ENCODE measurements at regions of chr3 and their contacts with region 1.

Region 1: DNA sequence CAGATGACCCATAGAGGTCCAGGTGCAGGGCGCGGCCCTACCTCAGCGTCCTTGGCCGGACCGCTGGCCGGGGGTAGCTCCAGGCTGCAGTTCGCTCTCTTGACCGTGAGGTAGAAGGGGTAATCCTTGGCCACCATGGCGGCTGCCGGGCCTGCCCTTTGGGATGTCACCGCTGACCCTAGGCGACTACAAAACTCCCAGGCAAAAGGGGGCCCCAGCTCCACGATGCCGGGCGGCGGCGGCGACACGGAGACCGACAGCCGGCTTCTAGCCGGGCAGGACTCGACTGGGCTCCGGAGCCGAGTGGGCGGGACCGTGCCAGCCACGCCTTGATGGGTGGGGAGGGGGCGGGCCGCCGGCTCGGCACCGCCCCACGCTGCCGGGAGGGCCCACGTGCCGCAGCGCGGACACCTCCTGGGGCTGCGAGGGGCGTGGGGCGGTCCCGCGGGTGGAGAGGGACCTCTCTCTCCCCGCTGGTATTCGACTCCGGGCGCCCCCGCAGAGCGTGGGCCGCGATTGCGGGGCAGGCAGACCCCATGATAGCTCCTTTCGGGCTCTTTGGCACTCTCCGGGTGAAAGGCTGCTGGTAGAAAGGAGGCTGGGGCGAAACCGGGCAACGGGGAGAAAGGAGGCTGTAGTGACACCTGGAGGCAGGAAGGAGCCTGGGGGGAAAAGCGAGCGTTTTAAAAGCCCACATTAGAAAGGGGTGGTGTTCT is at the start of gene ARHGEF3:
- DNase-seq: peak; percentile 95
- ATAC-seq: peak; percentile 92
- H3K4me3 ChIP-seq: peak within 1 kb of the TSS; percentile 66 to 96 (median 72)
- H3K4me3 Mint-ChIP-seq: peak within 1 kb of the TSS; percentile 92
- H3K27ac ChIP-seq: peak within 1 kb of the TSS; percentile 35 to 53
- H3K27ac Mint-ChIP-seq: peak within 1 kb of the TSS; percentile 87
- H3K4me1 ChIP-seq: peaks cover 38 to 39% of the 10 kb centered on the region in 2 donors
- H3K4me1 Mint-ChIP-seq: peaks cover 48% of the 10 kb centered on the region
- H3K27me3 ChIP-seq: no peaks in the 10 kb centered on the region
- H3K27me3 Mint-ChIP-seq: no peaks in the 10 kb centered on the region
- CTCF ChIP-seq: peak; percentile 75
- total RNA-seq, gene ARHGEF3: 30.8 and 34.6 TPM in 2 replicates

Region 2: DNA sequence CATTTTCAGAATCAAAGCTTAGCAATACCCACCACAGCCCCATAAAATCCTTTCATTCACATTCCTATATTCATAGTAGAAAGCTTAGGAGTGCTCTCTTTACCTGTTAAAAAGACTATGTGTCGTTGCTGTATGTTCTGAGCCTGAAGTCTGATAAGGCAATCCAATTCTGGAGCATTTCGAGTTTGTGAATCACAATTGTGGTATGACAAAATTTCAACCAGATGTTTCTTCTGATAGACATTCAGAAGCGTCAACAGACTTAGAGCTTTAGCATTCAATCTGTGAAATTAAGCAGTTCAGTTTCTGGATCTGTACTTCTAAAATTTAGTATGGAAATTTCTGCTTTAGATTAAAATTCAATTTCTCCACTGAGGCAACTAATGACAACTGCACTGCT is 177.1 kb before region 1 on chr3:
- CTCF ChIA-PET with region 1: no interaction called
- POLR2A ChIA-PET with region 1: no interaction called
- intact Hi-C with region 1: no loop called
- DNase-seq: no peak
- ATAC-seq: no peak
- H3K4me3 ChIP-seq: no peak overlapping the region
- H3K4me3 Mint-ChIP-seq: no peak overlapping the region
- H3K27ac ChIP-seq: no peak overlapping the region
- H3K27ac Mint-ChIP-seq: no peak overlapping the region
- H3K4me1 ChIP-seq: no peaks in the 10 kb centered on the region
- H3K4me1 Mint-ChIP-seq: no peaks in the 10 kb centered on the region
- H3K27me3 ChIP-seq: no peaks in the 10 kb centered on the region
- H3K27me3 Mint-ChIP-seq: no peaks in the 10 kb centered on the region
- CTCF ChIP-seq: no peak

Region 3: GRCh38 chr3:56682462-56683121 is 119.2 kb before region 1 on chr3:
- CTCF ChIA-PET with region 1: interaction called, 34 read pairs
- POLR2A ChIA-PET with region 1: interaction called, 24 read pairs
- intact Hi-C with region 1: loop called (anchors 1 kb)
- DNase-seq: peak; percentile 91
- ATAC-seq: peak; percentile 69
- H3K4me3 ChIP-seq: peak overlapping the region; percentile 74 to 99 (median 85)
- H3K4me3 Mint-ChIP-seq: peak overlapping the region; percentile 99
- H3K27ac ChIP-seq: peak overlapping the region; percentile 98 to 99
- H3K27ac Mint-ChIP-seq: peak overlapping the region; percentile 99
- H3K4me1 ChIP-seq: peaks cover 16 to 24% of the 10 kb centered on the region in 2 donors
- H3K4me1 Mint-ChIP-seq: peaks cover 42% of the 10 kb centered on the region
- H3K27me3 ChIP-seq: no peaks in the 10 kb centered on the region
- H3K27me3 Mint-ChIP-seq: no peaks in the 10 kb centered on the region
- CTCF ChIP-seq: no peak

Region 4: DNA sequence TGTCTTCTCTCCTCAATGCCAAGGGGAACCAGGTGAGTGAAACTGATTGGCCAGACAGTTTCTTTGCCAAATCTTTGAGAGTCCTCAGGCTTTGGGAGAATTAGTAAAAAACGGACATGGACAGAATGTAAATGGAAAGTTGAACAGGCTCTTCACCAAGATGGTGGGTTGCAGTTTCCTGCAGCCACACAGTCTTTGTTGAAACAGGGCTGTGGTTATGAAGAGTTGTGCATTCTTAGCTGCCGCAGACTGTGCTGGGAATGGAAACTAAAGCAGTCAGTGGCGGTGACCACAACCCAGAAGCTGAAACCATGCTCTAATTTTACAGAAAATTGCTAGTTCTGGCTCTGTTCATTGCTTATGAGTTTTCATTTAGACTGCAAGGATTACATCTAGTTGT is 76.6 kb before region 1 on chr3:
- CTCF ChIA-PET with region 1: interaction called, 61 read pairs
- POLR2A ChIA-PET with region 1: interaction called, 7 read pairs
- intact Hi-C with region 1: no loop called
- DNase-seq: peak; percentile 15
- ATAC-seq: peak; percentile 57
- H3K4me3 ChIP-seq: no peak overlapping the region
- H3K4me3 Mint-ChIP-seq: no peak overlapping the region
- H3K27ac ChIP-seq: peak overlapping the region in 1 of 2 donors; percentile 7
- H3K27ac Mint-ChIP-seq: peak overlapping the region; percentile 56
- H3K4me1 ChIP-seq: peaks cover 0 to 18% of the 10 kb centered on the region in 2 donors
- H3K4me1 Mint-ChIP-seq: peaks cover 17% of the 10 kb centered on the region
- H3K27me3 ChIP-seq: no peaks in the 10 kb centered on the region
- H3K27me3 Mint-ChIP-seq: no peaks in the 10 kb centered on the region
- CTCF ChIP-seq: no peak

Region 5: DNA sequence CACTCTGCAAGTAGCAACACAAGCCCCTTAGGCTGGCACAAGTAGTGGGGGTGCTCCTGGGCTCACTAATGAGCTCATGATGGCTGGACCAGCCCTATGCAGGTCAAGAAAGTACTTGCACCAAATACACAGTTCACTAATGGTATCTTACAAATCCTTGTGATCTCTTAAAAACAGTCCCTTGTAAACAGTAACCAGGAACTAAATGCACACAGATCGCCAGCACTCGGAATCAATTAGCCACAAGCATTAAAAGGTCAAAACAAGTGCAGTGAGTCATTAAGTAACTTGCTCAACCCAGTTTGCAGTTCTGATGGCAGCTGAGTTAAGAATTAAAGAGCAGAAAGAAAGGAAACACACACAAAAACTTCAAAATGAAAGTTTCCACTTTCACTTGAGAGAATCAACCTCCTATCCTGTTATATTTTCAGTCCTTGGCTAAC is 43.3 kb before region 1 on chr3:
- CTCF ChIA-PET with region 1: interaction called, 176 read pairs
- POLR2A ChIA-PET with region 1: interaction called, 33 read pairs
- intact Hi-C with region 1: loop called (anchors 1 kb)
- DNase-seq: peak; percentile 35
- ATAC-seq: peak; percentile 64
- H3K4me3 ChIP-seq: peak overlapping the region in 2 of 5 experiments; percentile 5 to 44
- H3K4me3 Mint-ChIP-seq: peak overlapping the region; percentile 72
- H3K27ac ChIP-seq: peak overlapping the region; percentile 67 to 81
- H3K27ac Mint-ChIP-seq: peak overlapping the region; percentile 97
- H3K4me1 ChIP-seq: peaks cover 43 to 57% of the 10 kb centered on the region in 2 donors
- H3K4me1 Mint-ChIP-seq: peaks cover 59% of the 10 kb centered on the region
- H3K27me3 ChIP-seq: no peaks in the 10 kb centered on the region
- H3K27me3 Mint-ChIP-seq: no peaks in the 10 kb centered on the region
- CTCF ChIP-seq: no peak

Region 6: GRCh38 chr3:56783644-56784447 is 18.0 kb before region 1 on chr3:
- CTCF ChIA-PET with region 1: interaction called, 190 read pairs
- POLR2A ChIA-PET with region 1: interaction called, 15 read pairs
- intact Hi-C with region 1: loop called (anchors 1 kb)
- DNase-seq: peak; percentile 87
- ATAC-seq: peak; percentile 99
- H3K4me3 ChIP-seq: peak overlapping the region in 1 of 5 experiments; percentile 45
- H3K4me3 Mint-ChIP-seq: peak overlapping the region; percentile 52
- H3K27ac ChIP-seq: peak overlapping the region; percentile 71 to 78
- H3K27ac Mint-ChIP-seq: peak overlapping the region; percentile 91
- H3K4me1 ChIP-seq: peaks cover 55 to 77% of the 10 kb centered on the region in 2 donors
- H3K4me1 Mint-ChIP-seq: peaks cover 82% of the 10 kb centered on the region
- H3K27me3 ChIP-seq: no peaks in the 10 kb centered on the region
- H3K27me3 Mint-ChIP-seq: no peaks in the 10 kb centered on the region
- CTCF ChIP-seq: no peak

Region 7: DNA sequence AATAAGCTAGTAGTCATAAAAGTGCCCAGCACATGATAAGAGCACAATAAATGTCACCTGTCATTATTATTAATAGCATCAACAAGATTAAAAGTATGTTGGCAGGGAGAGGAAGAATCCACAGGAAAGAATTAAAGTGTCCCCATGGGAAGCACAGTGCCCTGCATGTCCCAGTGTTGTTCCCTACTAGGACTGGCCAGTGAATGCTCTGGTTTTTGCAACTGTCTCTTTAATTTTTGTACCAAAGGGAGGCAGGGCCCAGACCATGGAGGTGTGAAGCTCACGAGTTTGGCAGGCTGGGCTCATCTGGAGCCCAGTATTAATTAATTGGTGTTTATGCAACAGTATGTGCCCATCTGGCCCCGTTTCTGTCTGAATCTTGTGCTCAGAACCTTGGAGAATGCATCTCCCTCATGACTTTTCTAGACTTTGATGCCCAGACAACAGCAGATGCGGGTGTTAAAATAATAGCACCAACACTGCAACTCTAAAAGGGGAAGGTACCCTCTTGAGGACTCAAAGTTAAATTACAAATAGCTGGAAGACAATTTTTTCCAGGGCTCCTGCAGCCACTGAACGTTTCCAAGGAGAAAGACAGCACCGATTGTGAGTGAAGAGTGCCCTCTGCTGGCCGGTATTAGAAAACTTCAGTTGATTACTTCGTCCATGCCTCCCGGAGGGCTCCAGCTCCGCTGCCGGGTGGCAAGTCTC is 186.8 kb after region 1 on chr3:
- CTCF ChIA-PET with region 1: interaction called, 205 read pairs
- POLR2A ChIA-PET with region 1: no interaction called
- intact Hi-C with region 1: loop called (anchors 1 kb)
- DNase-seq: peak; percentile 80
- ATAC-seq: peak; percentile 74
- H3K4me3 ChIP-seq: no peak overlapping the region
- H3K4me3 Mint-ChIP-seq: no peak overlapping the region
- H3K27ac ChIP-seq: no peak overlapping the region
- H3K27ac Mint-ChIP-seq: no peak overlapping the region
- H3K4me1 ChIP-seq: no peaks in the 10 kb centered on the region
- H3K4me1 Mint-ChIP-seq: no peaks in the 10 kb centered on the region
- H3K27me3 ChIP-seq: peaks cover 0 to 11% (median 4%) of the 10 kb centered on the region in 4 experiments
- H3K27me3 Mint-ChIP-seq: peaks cover 23% of the 10 kb centered on the region
- CTCF ChIP-seq: peak; percentile 99

Region 8: DNA sequence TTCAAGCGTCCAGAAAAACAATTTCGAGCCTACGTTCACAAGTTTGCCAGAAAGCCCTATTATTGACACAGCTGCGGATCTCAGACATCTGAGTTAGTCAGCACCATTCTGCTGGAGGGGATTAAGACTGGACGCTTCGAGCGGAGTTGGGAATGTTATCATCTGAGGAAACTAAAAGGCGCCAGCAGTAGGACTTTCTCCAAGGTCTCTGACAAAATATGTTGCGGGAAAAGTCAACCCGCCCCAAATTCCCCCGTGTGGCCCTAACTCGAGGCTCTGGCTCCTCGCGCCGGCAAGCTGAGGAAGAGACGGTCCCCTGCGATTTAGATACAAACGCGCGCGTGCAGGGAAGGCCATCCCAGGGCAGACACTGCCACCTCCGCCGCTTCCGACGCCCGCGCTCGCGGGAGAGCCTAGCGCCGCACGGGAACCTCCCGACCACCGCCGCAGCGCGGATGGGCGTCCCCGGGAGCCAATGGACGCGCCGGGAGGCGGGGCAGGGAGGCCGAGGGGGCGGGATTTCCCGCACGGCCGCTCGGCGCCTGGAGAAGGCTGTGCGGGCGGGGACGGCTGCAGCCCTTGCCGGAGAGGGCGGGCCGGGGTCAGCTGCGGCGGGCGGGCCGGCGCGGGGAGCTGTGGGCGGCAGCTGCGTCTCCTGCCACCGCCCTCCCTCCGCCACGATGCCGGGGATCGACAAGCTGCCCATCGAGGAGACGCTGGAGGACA is 425.5 kb after region 1 on chr3 and contains the start of gene APPL1:
- CTCF ChIA-PET with region 1: no interaction called
- POLR2A ChIA-PET with region 1: no interaction called
- intact Hi-C with region 1: loop called (anchors 5 kb)
- DNase-seq: peak; percentile 92
- ATAC-seq: peak; percentile 95
- H3K4me3 ChIP-seq: peak within 1 kb of the TSS; percentile 69 to 91 (median 77)
- H3K4me3 Mint-ChIP-seq: peak within 1 kb of the TSS; percentile 94
- H3K27ac ChIP-seq: peak within 1 kb of the TSS; percentile 55 to 79
- H3K27ac Mint-ChIP-seq: peak within 1 kb of the TSS; percentile 91
- H3K4me1 ChIP-seq: peaks cover 19 to 23% of the 10 kb centered on the region in 2 donors
- H3K4me1 Mint-ChIP-seq: peaks cover 38% of the 10 kb centered on the region
- H3K27me3 ChIP-seq: no peaks in the 10 kb centered on the region
- H3K27me3 Mint-ChIP-seq: no peaks in the 10 kb centered on the region
- CTCF ChIP-seq: no peak
- total RNA-seq, gene APPL1: 59.8 and 69.5 TPM in 2 replicates

Measured in B cell (primary cell).